Kidney (tissue), 22 donors: ENCODE measurements at regions of chr20 and their contacts with region 1.

Region 1: DNA sequence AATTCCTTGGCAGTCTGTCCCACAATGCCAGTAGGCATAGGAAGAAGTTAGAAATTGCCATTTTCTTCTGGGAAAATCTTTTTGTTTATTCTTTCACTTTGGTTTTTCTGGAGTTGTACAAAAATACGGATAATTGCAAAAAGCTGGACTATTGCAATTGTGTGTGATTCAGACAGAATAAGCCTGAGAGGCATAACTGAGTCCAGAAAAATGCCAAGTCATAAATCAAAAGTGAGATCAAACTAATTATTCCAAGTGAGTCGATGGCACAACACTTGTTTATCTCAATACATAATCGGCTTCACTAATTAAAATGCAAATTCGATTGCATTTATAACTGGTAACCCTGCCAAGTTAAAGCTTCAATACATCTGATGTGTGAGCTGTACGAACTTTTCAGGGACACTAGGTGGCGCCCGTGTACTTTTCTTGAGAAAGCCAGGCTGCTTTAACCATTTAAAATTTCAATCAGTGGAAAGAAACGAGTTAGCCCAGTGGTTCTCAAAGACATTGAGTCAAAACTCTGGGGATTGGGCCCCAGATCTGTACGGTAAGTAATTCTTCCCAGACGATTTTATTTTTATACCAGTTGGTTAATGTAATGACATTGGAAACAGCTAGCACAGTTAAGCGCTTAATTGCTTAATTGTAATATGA is 102.6 kb downstream of the LAMP5 start:
- DNase-seq: peak in 4 of 5 donors; percentile 58 to 78 (median 64)
- H3K4me3 ChIP-seq: no peak overlapping the region
- H3K27ac ChIP-seq: no peak overlapping the region
- H3K4me1 ChIP-seq: no peaks in the 10 kb centered on the region
- H3K27me3 ChIP-seq: no peaks in the 10 kb centered on the region
- CTCF ChIP-seq: peak; percentile 88

Region 2: DNA sequence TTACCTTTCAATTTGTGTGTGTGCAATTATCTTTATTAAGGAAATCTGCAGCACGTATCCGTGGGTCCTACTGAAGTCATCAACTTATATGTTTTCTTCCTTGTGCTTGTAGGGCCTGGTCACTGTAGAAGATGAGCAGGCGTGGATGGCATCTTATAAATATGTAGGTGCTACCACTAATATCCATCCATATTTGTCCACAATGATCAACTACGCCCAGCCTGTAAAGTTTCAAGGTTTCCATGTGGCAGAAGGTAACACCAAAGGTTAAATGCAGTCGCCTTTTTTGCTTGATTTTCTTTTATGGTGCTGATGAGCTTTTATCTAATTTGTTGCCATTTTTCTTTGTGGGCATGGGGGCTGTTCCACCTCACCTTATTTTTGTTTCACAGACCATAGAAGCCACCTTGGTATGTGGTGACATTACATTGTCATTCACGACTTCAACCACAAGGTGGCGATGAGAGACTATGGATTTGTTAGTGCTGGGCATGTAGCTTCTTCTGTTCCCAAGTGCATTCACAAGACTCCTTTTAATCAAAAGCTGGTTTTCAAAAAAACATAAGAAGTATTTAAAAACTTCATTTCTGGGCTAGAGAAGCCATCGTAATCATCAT is 209.0 kb before region 1 on chr20:
- intact Hi-C with region 1: loop called (anchors 10 kb)
- DNase-seq: peak in 4 of 5 donors; percentile 76 to 86 (median 80)
- H3K4me3 ChIP-seq: no peak overlapping the region
- H3K27ac ChIP-seq: no peak overlapping the region
- H3K4me1 ChIP-seq: no peaks in the 10 kb centered on the region
- H3K27me3 ChIP-seq: no peaks in the 10 kb centered on the region
- CTCF ChIP-seq: peak; percentile 88

Region 3: DNA sequence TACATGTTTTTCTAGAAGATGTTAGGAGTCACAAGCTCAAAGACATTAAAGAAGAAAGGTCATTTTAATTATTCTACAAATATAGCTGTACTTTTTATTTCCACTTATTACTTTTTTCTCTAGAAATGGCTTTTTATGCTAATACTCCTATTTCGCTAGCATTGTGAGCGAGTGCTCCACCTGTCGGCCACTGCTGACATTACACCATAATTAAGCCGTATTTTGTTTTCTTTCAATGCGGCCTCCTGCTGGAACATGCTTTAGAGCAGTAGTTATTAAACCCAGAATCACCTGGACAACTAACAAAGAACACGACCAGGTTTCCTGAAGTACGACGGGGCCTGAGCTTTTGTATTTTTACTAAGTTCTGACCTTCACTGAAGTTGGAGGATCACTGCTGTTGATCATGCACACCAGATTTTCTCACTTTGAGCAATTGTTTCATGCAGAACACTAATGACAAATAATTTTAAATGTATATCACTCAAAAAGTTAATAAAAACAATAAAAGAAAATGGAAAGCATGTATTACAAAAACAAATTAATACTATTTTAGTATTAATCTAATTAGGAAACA is 296.0 kb after region 1 on chr20:
- intact Hi-C with region 1: loop called (anchors 10 kb)
- DNase-seq: peak in 4 of 5 donors; percentile 38 to 66 (median 54)
- H3K4me3 ChIP-seq: no peak overlapping the region
- H3K27ac ChIP-seq: no peak overlapping the region
- H3K4me1 ChIP-seq: no peaks in the 10 kb centered on the region
- H3K27me3 ChIP-seq: no peaks in the 10 kb centered on the region
- CTCF ChIP-seq: peak; percentile 74